Aorta (tissue), 5 donors: ENCODE measurements at regions of chr18 and their contacts with region 1.

Region 1: GRCh38 chr18:24075731-24076130 is 61.2 kb downstream of the TTC39C start:
- DNase-seq: no peak
- ATAC-seq: no peak
- H3K4me3 ChIP-seq: no peak overlapping the region
- H3K27ac ChIP-seq: no peak overlapping the region
- H3K4me1 ChIP-seq: no peaks in the 10 kb centered on the region
- H3K27me3 ChIP-seq: no peaks in the 10 kb centered on the region

Region 2: DNA sequence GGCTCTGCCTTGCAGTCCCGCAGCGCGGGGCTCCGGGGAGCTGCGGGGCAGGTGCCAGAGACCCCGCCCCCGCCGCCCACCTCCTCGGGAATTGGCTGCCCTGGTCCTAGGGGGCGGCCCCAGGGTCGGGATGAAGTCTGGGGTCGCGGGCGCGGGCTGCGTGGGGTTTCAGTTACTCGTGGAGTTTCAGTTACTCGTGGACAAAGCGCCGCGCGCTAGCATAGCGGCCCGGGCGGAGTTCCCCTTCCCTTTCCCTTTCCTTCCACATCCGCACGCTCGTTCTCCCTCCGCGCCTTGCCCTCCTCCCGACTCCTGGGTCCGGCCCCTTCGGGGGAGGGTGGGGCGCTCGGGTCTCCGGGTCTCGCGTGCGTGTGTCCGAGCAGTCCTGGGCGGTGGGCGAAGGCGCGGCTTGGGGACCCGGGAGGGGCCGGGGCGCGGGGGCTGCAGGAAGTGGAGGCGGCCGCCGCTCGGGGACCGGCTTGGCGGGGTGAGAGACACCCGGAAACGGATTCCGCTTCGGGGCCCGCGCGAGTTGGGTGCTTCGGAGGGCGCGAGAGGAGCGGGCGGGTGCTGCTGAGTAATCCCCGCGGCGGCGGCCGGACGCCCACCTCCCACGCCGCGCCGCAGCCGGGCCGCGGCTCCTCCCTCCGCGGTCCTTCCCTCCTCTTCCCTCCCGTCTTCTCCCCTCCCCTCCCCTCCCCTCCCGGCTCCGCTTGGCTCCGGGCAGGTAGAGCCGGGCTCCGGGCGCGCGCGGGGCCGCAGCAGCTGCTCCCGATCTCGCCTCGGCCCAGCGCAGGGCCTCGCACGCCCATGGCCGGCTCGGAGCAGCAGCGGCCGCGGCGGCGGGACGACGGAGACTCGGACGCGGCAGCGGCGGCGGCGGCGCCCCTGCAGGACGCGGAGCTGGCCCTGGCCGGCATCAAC is 61.4 kb before region 1 on chr18 and contains the start of gene TTC39C:
- intact Hi-C with region 1: loop called in 1 of 2 experiments (anchors 2 kb)
- DNase-seq: peak; percentile 84 to 90
- ATAC-seq: peak; percentile 83
- H3K4me3 ChIP-seq: peak within 1 kb of the TSS; percentile 88 to 93
- H3K27ac ChIP-seq: peak within 1 kb of the TSS in 1 of 2 donors; percentile 27
- H3K4me1 ChIP-seq: no peaks in the 10 kb centered on the region
- H3K27me3 ChIP-seq: no peaks in the 10 kb centered on the region
- total RNA-seq, gene TTC39C: 13.4 to 21.2 TPM

Region 3: GRCh38 chr18:24089076-24089475 is 13.3 kb after region 1 on chr18:
- intact Hi-C with region 1: no loop called
- DNase-seq: no peak
- ATAC-seq: no peak
- H3K4me3 ChIP-seq: no peak overlapping the region
- H3K27ac ChIP-seq: no peak overlapping the region
- H3K4me1 ChIP-seq: no peaks in the 10 kb centered on the region
- H3K27me3 ChIP-seq: no peaks in the 10 kb centered on the region